HepG2 (cell line): ENCODE measurements at regions of chr21 and their contacts with region 1.

Region 1: DNA sequence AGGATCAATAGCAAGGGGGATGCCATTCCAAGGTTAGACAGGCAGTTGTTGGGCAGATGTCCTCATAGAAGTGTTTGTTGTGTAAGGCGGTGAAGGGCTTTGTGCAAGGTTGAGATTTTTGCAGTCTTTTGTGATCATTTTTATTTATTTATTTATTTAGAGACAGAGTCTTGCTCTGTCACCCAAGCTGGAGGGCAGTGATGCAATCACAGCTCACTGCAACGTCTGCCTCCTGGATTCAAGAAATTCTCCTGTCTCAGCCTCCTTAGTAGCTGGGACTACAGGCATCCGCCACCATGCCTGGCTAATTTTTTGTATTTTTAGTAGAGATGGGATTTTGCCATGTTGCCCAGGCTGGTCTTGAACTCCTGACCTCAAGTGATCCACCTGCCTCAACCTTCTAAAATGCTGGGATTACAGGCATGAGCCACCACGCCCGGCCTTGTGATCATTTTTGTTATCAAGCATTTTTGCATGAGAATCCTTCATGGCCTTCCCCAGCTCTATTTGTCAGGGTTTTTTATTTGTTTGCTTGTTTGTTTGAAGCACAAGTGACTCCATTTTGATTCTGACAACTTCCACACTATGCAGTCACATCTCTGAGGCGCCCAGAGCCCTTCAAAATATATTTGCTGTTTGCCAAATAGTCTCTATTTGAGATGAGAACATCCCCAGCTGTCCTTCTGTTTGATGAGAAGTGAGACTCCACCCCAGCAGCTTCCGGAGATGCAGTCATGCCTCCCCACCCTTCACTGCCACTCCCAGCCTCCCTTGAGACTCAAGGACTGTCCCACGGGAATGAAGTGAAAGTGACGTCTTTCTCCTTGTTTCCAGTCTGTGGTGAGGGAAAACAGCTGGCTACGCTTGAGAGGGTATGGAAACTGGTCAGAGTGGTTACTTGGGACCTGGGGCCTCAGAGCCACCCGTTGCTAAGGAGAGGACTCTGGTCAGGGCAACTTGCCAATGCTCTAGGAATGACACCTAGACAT is 38.0 kb downstream of the TMEM50B start:
- DNase-seq: no peak
- ATAC-seq: no peak
- H3K4me3 ChIP-seq: no peak overlapping the region
- H3K27ac ChIP-seq: no peak overlapping the region
- H3K4me1 ChIP-seq: no peaks in the 10 kb centered on the region
- H3K27me3 ChIP-seq: no peaks in the 10 kb centered on the region
- CTCF ChIP-seq: no peak
- EP300 ChIP-seq: no peak
- POLR2A ChIP-seq: no peak
- RAD21 ChIP-seq: no peak

Region 2: DNA sequence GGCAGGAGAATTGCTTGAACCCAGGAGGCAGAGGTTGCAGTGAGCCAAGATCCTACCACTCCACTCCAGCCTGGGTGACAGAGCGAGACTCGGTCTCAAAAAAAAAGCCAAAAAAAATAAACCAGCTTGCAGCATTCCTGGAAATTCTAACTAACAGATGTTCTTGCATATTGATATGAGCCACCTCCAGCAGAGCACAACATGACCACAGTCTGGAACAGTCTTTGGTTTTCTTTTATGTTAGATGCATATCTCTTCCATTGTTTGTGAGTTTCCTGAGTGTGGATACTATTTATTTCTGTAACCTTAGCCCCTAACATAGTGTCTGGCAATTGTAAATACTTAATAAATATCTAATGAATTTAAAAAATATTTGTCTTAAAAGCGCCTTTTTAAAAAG is 93.1 kb before region 1 on chr21:
- CTCF ChIA-PET with region 1: interaction called, 10 read pairs
- POLR2A ChIA-PET with region 1: no interaction called
- in situ Hi-C with region 1: loop called (anchors 10 kb)
- intact Hi-C with region 1: no loop called
- DNase-seq: no peak
- ATAC-seq: no peak
- H3K4me3 ChIP-seq: no peak overlapping the region
- H3K27ac ChIP-seq: no peak overlapping the region
- H3K4me1 ChIP-seq: no peaks in the 10 kb centered on the region
- H3K27me3 ChIP-seq: no peaks in the 10 kb centered on the region
- CTCF ChIP-seq: no peak
- EP300 ChIP-seq: no peak
- POLR2A ChIP-seq: no peak
- RAD21 ChIP-seq: no peak

Region 3: DNA sequence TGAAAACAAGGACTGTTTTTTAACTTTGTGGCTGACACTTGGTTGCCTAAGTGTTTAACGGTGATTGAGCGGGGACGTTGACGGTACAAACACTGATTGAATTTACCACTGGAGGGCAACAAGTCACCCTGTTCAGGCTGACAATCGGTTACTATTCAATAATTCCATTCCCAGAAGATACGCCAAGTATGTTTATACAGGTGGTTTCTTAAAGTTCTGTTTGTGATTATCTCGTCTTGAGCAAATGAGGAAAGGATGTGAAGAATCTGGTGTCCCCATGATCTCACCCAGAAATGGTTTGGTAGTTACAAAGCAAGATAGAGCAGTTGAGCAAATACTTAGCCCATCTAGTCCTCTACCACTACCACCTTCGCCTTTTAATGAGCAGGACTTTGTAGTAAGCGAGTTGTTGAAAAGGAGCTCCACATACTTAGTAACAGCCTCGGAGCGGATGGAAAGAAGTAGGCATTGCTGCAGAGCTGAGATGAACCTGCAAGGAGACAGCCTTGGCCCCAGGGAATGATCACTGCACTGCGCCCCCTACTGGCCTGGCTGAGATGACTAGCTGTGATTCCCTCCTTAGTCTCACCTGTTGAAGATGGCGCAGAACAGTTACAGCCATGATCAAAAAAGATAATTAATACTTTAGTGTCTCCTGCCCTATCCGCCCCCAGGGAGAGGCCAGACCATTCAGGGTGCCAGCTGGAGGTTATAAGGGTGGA is 80.7 kb before region 1 on chr21:
- CTCF ChIA-PET with region 1: interaction called, 7 read pairs
- POLR2A ChIA-PET with region 1: no interaction called
- in situ Hi-C with region 1: no loop called
- intact Hi-C with region 1: loop called (anchors 1 kb)
- DNase-seq: peak; percentile 50
- ATAC-seq: peak; percentile 96
- H3K4me3 ChIP-seq: peak overlapping the region; percentile 27 to 41 (median 40); a peak in 2 of 6 replicates
- H3K27ac ChIP-seq: no peak overlapping the region
- H3K4me1 ChIP-seq: peaks cover 38% of the 10 kb centered on the region
- H3K27me3 ChIP-seq: no peaks in the 10 kb centered on the region
- CTCF ChIP-seq: peak; percentile 93
- EP300 ChIP-seq: no peak
- POLR2A ChIP-seq: no peak
- RAD21 ChIP-seq: 0 out of 2 replicates have a peak, but pooled peaks have one; percentile 27